AG04449 (cell line): ENCODE measurements at regions of chr15 and their contacts with region 1.

Region 1: GRCh38 chr15:89057504-89058133 is 30.6 kb upstream of the ABHD2 start:
- DNase-seq: no peak
- H3K4me3 ChIP-seq: no peak overlapping the region
- CTCF ChIP-seq: peak; percentile 98

Region 2: GRCh38 chr15:89068325-89068784 is 10.7 kb after region 1 on chr15:
- CTCF ChIA-PET with region 1: interaction called, 33 read pairs
- POLR2A ChIA-PET with region 1: interaction called, 10 read pairs
- DNase-seq: peak; percentile 69
- H3K4me3 ChIP-seq: no peak overlapping the region
- CTCF ChIP-seq: no peak

Region 3: GRCh38 chr15:89101302-89102191 is 43.9 kb after region 1 on chr15:
- CTCF ChIA-PET with region 1: interaction called, 16 read pairs
- POLR2A ChIA-PET with region 1: no interaction called
- DNase-seq: peak; percentile 93
- H3K4me3 ChIP-seq: no peak overlapping the region
- CTCF ChIP-seq: no peak

Region 4: GRCh38 chr15:89129123-89129815 is 71.7 kb after region 1 on chr15:
- CTCF ChIA-PET with region 1: interaction called, 122 read pairs
- POLR2A ChIA-PET with region 1: no interaction called
- DNase-seq: no peak
- H3K4me3 ChIP-seq: no peak overlapping the region
- CTCF ChIP-seq: peak; percentile 70

Region 5: DNA sequence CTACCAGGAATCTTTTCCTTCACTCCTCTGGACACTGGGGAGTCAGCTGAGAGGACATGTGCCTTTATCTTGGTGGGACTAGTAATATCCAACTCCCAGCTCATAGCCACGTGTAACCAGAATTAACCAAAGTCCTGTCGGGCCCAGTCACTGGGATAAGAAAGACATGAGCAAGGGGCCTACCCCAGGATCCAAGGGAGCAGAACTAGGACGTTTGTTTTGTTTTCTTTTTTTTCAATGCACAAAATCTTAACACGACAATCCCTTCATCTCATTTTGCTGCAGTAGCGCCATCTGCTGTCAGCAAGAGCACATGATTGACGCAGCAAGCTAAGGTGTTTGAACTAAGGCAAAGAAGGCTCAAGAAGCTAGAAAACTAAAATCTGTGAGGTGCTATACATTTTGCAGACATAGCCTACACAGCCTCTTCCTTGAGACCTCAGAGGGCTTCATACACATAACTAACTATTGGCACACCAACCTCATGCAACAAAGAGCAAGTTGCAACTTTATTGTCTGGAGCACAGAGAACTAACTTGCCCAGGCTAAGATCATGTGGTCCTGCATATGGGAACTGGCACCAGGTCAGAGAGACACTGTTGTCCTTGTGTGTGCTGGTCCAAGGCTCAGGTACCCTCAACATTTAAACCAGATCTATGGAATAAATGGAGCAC is 120.2 kb after region 1 on chr15:
- CTCF ChIA-PET with region 1: interaction called, 677 read pairs
- POLR2A ChIA-PET with region 1: no interaction called
- DNase-seq: peak; percentile 37
- H3K4me3 ChIP-seq: no peak overlapping the region
- CTCF ChIP-seq: peak; percentile 80